ENCODE measurements at regions of chr10 and their contacts with region 1.

Region 1: GRCh38 chr10:79374312-79375191 is 27.3 kb downstream of the PPIF start:
- DNase-seq: peak; percentile 83 to 90 (median 88)
- H3K4me3 ChIP-seq: no peak overlapping the region
- H3K27ac ChIP-seq: no peak overlapping the region
- H3K4me1 ChIP-seq: peaks cover 0 to 3% (median 0%) of the 10 kb centered on the region in 3 donors
- H3K27me3 ChIP-seq: no peaks in the 10 kb centered on the region
- CTCF ChIP-seq: peak; percentile 97

Region 2: DNA sequence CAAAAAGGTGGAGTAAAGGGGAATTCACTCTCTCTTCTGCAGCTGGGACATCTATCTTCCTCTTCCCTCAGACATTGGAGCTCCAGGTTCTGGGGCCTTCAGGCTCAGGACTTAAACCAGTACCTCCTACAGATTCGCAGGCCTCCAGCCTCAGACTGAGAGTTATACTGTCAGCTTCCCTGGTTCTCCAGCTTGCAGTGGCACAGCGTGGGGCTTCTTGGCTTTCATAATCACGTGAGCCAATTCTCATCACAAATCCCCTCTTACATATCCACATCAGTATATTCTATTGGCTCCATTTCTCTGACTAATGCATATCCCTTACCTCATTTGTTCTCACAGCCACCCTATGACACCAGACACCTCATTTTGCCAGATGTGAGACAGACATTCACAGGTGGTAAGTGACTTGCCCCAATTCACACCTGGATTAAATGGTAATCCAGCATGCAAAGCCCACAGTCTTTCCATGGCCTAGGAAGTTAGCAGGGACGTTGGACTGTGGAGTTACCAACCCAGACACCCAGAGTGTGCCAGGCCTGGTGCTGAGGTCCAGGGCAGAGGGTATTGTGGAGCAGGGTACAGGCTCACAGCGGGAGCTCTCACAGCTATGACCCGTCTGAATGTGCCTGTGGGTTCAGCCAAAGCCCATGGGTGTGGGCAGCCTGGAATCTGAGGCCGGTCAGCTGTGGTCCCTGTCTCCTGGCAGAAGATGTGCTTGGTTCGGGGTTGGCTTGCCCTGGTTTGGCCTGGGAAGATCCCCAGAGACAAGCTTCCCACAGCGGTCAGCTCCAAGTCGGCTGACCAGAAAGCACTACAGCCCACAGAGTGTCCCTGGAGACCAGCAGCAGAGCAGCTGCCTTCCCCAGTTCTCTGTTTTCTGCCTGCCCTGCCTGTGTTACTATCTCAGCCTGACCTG is 89.3 kb after region 1 on chr10:
- intact Hi-C with region 1: loop called (anchors 5 kb)
- DNase-seq: peak in 1 of 5 donors; percentile 88
- H3K4me3 ChIP-seq: no peak overlapping the region
- H3K27ac ChIP-seq: no peak overlapping the region
- H3K4me1 ChIP-seq: peaks cover 0 to 4% (median 0%) of the 10 kb centered on the region in 3 donors
- H3K27me3 ChIP-seq: no peaks in the 10 kb centered on the region
- CTCF ChIP-seq: no peak

Region 3: DNA sequence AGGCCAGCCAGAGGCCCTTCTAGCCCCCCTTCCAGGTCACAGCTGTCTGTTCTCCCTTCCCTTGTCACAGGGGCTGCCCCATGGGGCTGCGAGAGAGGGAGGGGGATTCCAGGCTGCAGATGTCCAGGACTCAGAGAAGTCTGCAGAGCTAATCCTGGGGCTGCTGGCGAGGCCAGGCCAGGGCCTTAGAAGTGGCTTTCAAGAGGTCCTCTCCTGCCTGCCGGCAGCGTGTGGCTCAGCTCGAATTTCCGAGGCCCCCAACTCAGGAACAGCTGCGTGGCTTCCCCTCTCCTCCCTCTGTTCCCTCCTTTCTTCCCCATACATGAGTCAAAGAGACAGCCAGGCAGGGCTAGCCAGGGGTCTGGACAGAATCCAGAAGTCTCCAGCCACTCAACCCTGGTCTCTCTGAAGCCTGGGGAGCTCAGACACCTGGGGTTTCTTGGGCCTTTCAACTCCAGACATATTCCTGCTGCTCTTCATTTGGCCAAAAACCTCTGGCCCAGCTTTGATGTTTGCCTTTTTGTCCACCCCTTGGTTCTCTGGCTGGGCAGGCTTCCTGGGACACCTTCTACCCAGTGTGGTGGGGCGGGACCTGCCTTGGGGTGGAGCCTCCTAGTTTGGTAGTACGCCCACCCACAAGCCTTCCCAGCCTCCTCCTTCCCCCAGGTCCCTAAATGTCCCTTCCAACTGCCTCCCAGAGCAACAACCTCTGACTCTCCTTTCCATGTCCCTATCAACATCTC is 116.0 kb after region 1 on chr10:
- intact Hi-C with region 1: loop called (anchors 10 kb)
- DNase-seq: peak; percentile 65 to 93 (median 74)
- H3K4me3 ChIP-seq: no peak overlapping the region
- H3K27ac ChIP-seq: no peak overlapping the region
- H3K4me1 ChIP-seq: peaks cover 0 to 6% (median 0%) of the 10 kb centered on the region in 3 donors
- H3K27me3 ChIP-seq: no peaks in the 10 kb centered on the region
- CTCF ChIP-seq: no peak